ENCODE measurements at regions of chr10 and their contacts with region 1.

Region 1: DNA sequence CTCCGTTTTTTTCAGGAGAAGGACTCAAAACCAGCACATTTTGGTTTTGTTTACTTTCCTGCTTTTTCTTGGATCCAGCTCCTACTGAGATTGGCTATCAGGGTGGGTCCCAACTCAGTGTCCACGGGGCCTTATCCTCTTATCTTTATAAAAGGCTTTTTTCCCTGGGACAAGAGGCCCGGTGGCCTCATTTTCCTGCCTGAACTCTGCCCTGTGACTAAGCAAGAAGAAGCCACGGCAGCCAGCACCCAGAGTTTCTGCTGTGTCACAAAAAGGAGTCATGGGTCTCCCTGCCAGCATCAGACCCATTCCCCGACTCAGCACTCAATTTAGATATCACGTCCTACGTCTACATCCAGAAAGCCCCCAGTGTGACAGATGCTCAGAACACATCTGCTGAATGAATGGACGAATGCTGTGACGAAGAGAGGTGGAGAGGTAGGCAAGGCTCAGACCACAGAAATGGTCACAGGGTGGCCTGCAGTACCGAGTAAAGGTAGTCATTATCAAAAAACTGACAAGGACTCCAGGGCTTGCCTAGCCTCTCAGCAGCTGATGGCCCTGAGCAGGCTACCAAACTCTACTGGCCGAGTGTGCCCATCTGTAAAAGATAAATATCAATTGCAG is 16.7 kb downstream of the DLG5 start:
- DNase-seq: no peak
- ATAC-seq: no peak
- H3K4me3 ChIP-seq: no peak overlapping the region
- H3K27ac ChIP-seq: peak overlapping the region; percentile 9; the same call in 1 of the 2 replicates
- H3K4me1 ChIP-seq: peaks cover 24% of the 10 kb centered on the region
- H3K27me3 ChIP-seq: no peaks in the 10 kb centered on the region
- CTCF ChIP-seq: no peak

Region 2: DNA sequence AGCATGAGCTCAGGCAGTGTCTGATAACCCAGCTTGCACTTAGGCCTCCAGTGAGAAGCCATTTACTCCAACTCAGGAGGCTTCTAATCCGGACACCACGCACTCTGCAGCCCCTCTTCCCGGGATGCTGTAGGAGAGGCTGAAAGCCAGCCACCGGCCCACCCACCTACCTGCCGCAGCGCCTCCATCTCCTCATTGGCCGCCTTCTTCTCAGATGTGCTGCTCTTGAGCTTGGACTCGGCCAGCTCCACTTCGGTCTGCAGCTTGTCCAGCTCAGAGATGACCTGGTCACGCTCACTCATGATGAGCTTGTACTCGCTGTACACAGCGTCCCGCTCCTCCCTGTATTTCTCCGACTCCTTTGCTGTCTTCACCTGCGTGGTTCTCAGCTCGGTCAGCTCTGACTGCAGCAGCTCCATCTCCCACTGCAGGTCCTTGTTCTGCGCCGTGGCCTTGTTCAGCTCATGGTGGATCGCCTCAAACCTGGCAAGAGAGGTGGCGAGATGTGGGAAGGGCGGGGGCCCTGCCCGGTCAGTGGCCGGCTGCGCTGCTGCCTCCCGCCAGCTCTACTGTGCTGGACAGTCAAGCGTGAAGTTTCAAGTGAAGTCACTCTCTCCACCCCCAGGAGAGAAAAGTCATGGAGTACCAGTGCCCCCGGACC is 68.0 kb before region 1 on chr10:
- CTCF ChIA-PET with region 1: interaction called, 12 read pairs
- POLR2A ChIA-PET with region 1: no interaction called
- in situ Hi-C with region 1: no loop called
- intact Hi-C with region 1: no loop called
- DNase-seq: no peak
- ATAC-seq: no peak
- H3K4me3 ChIP-seq: no peak overlapping the region
- H3K27ac ChIP-seq: no peak overlapping the region
- H3K4me1 ChIP-seq: peaks cover 6% of the 10 kb centered on the region
- H3K27me3 ChIP-seq: no peaks in the 10 kb centered on the region
- CTCF ChIP-seq: no peak

Region 3: GRCh38 chr10:77965294-77965693 is 55.4 kb after region 1 on chr10:
- CTCF ChIA-PET with region 1: no interaction called
- POLR2A ChIA-PET with region 1: no interaction called
- in situ Hi-C with region 1: no loop called
- intact Hi-C with region 1: loop called (anchors 10 kb)
- DNase-seq: no peak
- ATAC-seq: no peak
- H3K4me3 ChIP-seq: no peak overlapping the region
- H3K27ac ChIP-seq: no peak overlapping the region
- H3K4me1 ChIP-seq: no peaks in the 10 kb centered on the region
- H3K27me3 ChIP-seq: no peaks in the 10 kb centered on the region
- CTCF ChIP-seq: no peak